ENCODE measurements at regions of chr9 and their contacts with region 1.

Region 1: DNA sequence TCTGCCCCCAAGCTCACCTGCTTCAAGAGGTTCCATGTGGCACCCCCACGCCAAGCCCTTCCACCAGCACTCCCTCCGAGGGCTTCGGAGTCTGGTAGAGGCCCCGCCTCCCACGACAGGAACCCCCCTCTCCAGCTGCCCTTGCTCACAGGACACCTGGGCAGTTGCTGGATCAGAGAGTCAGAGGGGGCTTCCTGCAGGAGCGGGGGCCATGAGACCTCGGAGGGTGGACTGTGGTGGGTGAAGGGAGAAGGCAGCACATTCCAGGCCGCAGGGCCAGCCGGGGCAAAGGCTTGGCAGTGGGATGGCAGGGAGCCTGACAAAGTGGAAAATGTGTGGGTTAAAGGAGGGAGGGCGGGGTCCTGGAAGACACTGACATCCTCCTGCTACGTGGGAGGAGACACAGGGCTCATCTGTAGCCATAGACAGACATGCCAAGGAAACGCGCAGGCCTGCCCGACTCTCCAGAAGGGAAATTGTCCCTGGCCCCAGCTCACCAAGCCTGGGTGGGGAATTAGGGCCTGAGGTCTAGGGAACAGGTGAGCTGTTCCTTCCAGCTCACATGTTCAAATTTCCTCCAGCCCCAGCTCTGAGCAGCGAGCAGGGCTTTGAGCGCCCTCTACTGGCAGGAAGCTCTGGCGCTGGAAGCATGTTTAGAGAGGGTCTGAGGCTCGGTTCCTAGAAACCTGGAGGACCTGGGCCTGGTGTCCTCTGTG is 74.2 kb downstream of the NTNG2 start:
- DNase-seq: peak; percentile 66 to 95 (median 88)

Region 2: DNA sequence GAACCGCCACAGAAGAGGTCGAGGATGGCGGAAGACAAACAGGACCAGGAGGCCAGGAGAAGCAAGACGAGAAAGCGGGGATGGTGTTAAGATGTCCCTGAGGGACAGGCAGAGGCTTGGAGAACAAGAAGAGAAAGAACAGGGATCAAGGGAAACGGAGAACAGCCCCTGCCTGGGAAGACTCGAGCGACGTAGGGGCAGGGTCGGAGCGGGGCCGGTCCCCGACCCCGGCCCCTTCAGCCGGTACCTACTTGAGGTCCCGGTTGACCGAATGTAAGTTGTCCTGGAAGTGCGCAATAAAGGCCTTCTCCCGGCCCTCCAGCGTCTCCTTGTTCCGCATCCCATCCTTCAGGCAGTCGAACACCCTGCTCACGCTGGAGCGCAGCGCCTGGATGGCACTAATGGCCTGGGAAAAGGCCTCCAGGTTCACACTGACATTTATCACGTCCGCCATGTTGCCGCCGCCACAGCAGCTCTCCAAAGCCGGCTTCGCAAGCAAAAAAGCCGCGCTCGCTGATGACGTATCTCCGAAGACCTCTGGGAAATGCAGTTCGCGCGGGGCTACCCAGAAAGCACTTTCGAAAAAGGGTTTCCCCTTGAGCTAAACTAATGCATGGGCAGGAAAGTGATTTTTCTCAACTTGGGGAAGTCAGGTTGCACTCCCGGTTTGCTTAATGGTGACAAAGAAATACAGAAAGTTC is 156.6 kb before region 1 on chr9 and contains the start of gene MED27:
- intact Hi-C with region 1: loop called (anchors 10 kb)
- DNase-seq: peak; percentile 91 to 98 (median 96)

Region 3: GRCh38 chr9:132169672-132170392 is 66.3 kb before region 1 on chr9:
- intact Hi-C with region 1: loop called (anchors 5 kb)
- DNase-seq: peak in 41 of 42 donors; percentile 49 to 90 (median 76)

Region 4: GRCh38 chr9:132185073-132186012 is 50.8 kb before region 1 on chr9:
- intact Hi-C with region 1: no loop called
- DNase-seq: peak in 30 of 42 donors; percentile 28 to 73 (median 60)

Measured in head of caudate nucleus (tissue), 42 donors.